CD4-positive, alpha-beta T cell (primary cell): ENCODE measurements at regions of chr12 and their contacts with region 1.

Region 1: GRCh38 chr12:47882781-47883546 is 21.8 kb downstream of the VDR start:
- DNase-seq: peak in 11 of 14 experiments; percentile 23 to 54 (median 40)
- ATAC-seq: peak; percentile 84
- H3K4me3 ChIP-seq: peak overlapping the region; percentile 55
- H3K4me3 Mint-ChIP-seq: peak overlapping the region; percentile 88
- H3K27ac ChIP-seq: no peak overlapping the region
- H3K27ac Mint-ChIP-seq: peak overlapping the region; percentile 70
- H3K4me1 ChIP-seq: peaks cover 44% of the 10 kb centered on the region
- H3K4me1 Mint-ChIP-seq: peaks cover 52% of the 10 kb centered on the region
- H3K27me3 ChIP-seq: no peaks in the 10 kb centered on the region
- H3K27me3 Mint-ChIP-seq: no peaks in the 10 kb centered on the region
- CTCF ChIP-seq: no peak

Region 2: DNA sequence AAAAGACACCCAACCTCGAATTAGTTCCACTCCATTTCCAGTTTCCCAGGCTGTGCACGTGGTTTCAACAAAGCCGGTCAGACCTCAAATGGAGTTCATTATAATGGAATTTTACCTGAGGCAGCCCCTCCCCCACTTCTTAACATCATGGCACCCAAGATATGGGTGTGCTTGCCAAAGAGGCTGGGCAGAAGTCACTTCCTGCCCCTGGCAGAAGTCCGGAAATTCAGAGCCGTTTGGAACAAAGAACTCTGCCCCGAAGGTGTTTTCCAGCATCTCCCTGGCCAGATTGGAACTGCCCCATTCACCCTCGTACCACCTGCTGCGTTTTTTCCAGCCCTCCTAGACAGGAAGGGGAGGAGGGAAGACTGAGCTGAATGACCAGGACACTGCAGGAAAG is 13.7 kb after region 1 on chr12:
- CTCF ChIA-PET with region 1: no interaction called
- POLR2A ChIA-PET with region 1: interaction called, 13 read pairs
- intact Hi-C with region 1: no loop called
- DNase-seq: no peak
- ATAC-seq: no peak
- H3K4me3 ChIP-seq: no peak overlapping the region
- H3K4me3 Mint-ChIP-seq: no peak overlapping the region
- H3K27ac ChIP-seq: no peak overlapping the region
- H3K27ac Mint-ChIP-seq: no peak overlapping the region
- H3K4me1 ChIP-seq: peaks cover 42% of the 10 kb centered on the region
- H3K4me1 Mint-ChIP-seq: peaks cover 31% of the 10 kb centered on the region
- H3K27me3 ChIP-seq: no peaks in the 10 kb centered on the region
- H3K27me3 Mint-ChIP-seq: no peaks in the 10 kb centered on the region
- CTCF ChIP-seq: no peak

Region 3: DNA sequence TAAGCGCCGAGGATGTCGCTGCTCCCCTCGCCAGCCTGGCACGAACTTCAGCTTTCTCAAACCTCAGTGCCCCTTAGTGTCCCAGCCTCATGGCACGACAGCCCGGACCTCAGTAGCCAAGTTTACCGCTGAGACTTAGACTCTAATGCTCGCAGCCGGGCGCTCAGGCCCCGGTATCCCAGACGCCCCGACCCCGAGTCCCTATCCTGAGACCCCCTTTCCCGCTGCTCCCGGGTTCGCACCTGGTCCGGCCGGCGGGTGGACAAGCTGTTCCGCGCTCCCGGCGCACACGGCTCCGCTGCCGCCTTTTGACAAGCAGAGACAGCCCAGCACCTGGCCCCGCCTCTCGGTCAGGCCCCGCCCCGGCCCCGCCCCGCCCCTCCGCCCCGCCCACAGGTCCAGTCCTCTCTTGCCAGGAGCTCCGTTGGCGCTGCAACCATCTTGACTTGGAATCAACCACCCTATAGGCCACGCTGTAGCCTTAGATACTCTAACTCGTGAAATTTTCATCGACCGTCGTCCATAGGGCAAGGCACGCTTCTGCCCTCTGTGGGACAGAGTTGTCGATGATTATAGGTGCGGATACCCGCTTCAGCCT is 21.8 kb after region 1 on chr12 and contains the start of gene VDR:
- CTCF ChIA-PET with region 1: no interaction called
- POLR2A ChIA-PET with region 1: interaction called, 15 read pairs
- intact Hi-C with region 1: no loop called
- DNase-seq: peak; percentile 49 to 91 (median 66)
- ATAC-seq: peak; percentile 70
- H3K4me3 ChIP-seq: peak within 1 kb of the TSS; percentile 81
- H3K4me3 Mint-ChIP-seq: peak within 1 kb of the TSS; percentile 95
- H3K27ac ChIP-seq: no peak within 1 kb of the TSS
- H3K27ac Mint-ChIP-seq: peak within 1 kb of the TSS; percentile 55
- H3K4me1 ChIP-seq: peaks cover 59% of the 10 kb centered on the region
- H3K4me1 Mint-ChIP-seq: peaks cover 59% of the 10 kb centered on the region
- H3K27me3 ChIP-seq: no peaks in the 10 kb centered on the region
- H3K27me3 Mint-ChIP-seq: no peaks in the 10 kb centered on the region
- CTCF ChIP-seq: peak; percentile 60
- total RNA-seq, gene VDR: 0.93 to 1.6 TPM

Region 4: GRCh38 chr12:47920913-47921312 is 37.9 kb after region 1 on chr12:
- CTCF ChIA-PET with region 1: no interaction called
- POLR2A ChIA-PET with region 1: no interaction called
- intact Hi-C with region 1: no loop called
- DNase-seq: no peak
- ATAC-seq: no peak
- H3K4me3 ChIP-seq: no peak overlapping the region
- H3K4me3 Mint-ChIP-seq: no peak overlapping the region
- H3K27ac ChIP-seq: no peak overlapping the region
- H3K27ac Mint-ChIP-seq: no peak overlapping the region
- H3K4me1 ChIP-seq: no peaks in the 10 kb centered on the region
- H3K4me1 Mint-ChIP-seq: no peaks in the 10 kb centered on the region
- H3K27me3 ChIP-seq: no peaks in the 10 kb centered on the region
- H3K27me3 Mint-ChIP-seq: no peaks in the 10 kb centered on the region
- CTCF ChIP-seq: no peak

Region 5: GRCh38 chr12:48037267-48037915 is 154.4 kb after region 1 on chr12:
- CTCF ChIA-PET with region 1: no interaction called
- POLR2A ChIA-PET with region 1: no interaction called
- intact Hi-C with region 1: no loop called
- DNase-seq: no peak
- ATAC-seq: no peak
- H3K4me3 ChIP-seq: no peak overlapping the region
- H3K4me3 Mint-ChIP-seq: no peak overlapping the region
- H3K27ac ChIP-seq: no peak overlapping the region
- H3K27ac Mint-ChIP-seq: no peak overlapping the region
- H3K4me1 ChIP-seq: peaks cover 3% of the 10 kb centered on the region
- H3K4me1 Mint-ChIP-seq: no peaks in the 10 kb centered on the region
- H3K27me3 ChIP-seq: no peaks in the 10 kb centered on the region
- H3K27me3 Mint-ChIP-seq: no peaks in the 10 kb centered on the region
- CTCF ChIP-seq: no peak